ENCODE measurements at regions of chr16 and their contacts with region 1.

Region 1: GRCh38 chr16:67521095-67521804 is 7.4 kb upstream of the RIPOR1 start:
- DNase-seq: peak; percentile 88 to 97 (median 93)
- ATAC-seq: peak; percentile 94
- H3K4me3 ChIP-seq: peak overlapping the region; percentile 92
- H3K4me3 Mint-ChIP-seq: peak overlapping the region; percentile 86 to 94 (median 92)
- H3K27ac ChIP-seq: peak overlapping the region; percentile 87
- H3K27ac Mint-ChIP-seq: peak overlapping the region; percentile 91 to 99 (median 96)
- H3K4me1 ChIP-seq: peaks cover 6 to 9% of the 10 kb centered on the region in 2 donors
- H3K4me1 Mint-ChIP-seq: peaks cover 14 to 35% (median 23%) of the 10 kb centered on the region in 7 donors
- H3K27me3 ChIP-seq: no peaks in the 10 kb centered on the region
- H3K27me3 Mint-ChIP-seq: peaks cover 0 to 28% (median 0%) of the 10 kb centered on the region in 5 donors

Region 2: GRCh38 chr16:67326472-67327309 is 194.6 kb before region 1 on chr16 and contains the starts of genes KCTD19 and LRRC36:
- CTCF ChIA-PET with region 1: no interaction called
- POLR2A ChIA-PET with region 1: no interaction called
- intact Hi-C with region 1: no loop called
- DNase-seq: peak; percentile 5 to 73 (median 17)
- ATAC-seq: peak; percentile 68
- H3K4me3 ChIP-seq: peak within 1 kb of the TSS; percentile 61
- H3K4me3 Mint-ChIP-seq: peak within 1 kb of the TSS; percentile 77 to 94 (median 84)
- H3K27ac ChIP-seq: no peak within 1 kb of the TSS
- H3K27ac Mint-ChIP-seq: peak within 1 kb of the TSS in 4 of 9 donors; percentile 47 to 78 (median 67)
- H3K4me1 ChIP-seq: peaks cover 6 to 11% of the 10 kb centered on the region in 2 donors
- H3K4me1 Mint-ChIP-seq: peaks cover 7 to 17% (median 11%) of the 10 kb centered on the region in 7 donors
- H3K27me3 ChIP-seq: no peaks in the 10 kb centered on the region
- H3K27me3 Mint-ChIP-seq: peaks cover 32 to 57% (median 42%) of the 10 kb centered on the region in 5 donors
- total RNA-seq, gene KCTD19: 0.05 to 0.39 TPM in 2 of 5 experiments, not detected in the others
- total RNA-seq, gene LRRC36: 0.50 to 0.56 TPM in 2 of 5 experiments, not detected in the others

Region 3: DNA sequence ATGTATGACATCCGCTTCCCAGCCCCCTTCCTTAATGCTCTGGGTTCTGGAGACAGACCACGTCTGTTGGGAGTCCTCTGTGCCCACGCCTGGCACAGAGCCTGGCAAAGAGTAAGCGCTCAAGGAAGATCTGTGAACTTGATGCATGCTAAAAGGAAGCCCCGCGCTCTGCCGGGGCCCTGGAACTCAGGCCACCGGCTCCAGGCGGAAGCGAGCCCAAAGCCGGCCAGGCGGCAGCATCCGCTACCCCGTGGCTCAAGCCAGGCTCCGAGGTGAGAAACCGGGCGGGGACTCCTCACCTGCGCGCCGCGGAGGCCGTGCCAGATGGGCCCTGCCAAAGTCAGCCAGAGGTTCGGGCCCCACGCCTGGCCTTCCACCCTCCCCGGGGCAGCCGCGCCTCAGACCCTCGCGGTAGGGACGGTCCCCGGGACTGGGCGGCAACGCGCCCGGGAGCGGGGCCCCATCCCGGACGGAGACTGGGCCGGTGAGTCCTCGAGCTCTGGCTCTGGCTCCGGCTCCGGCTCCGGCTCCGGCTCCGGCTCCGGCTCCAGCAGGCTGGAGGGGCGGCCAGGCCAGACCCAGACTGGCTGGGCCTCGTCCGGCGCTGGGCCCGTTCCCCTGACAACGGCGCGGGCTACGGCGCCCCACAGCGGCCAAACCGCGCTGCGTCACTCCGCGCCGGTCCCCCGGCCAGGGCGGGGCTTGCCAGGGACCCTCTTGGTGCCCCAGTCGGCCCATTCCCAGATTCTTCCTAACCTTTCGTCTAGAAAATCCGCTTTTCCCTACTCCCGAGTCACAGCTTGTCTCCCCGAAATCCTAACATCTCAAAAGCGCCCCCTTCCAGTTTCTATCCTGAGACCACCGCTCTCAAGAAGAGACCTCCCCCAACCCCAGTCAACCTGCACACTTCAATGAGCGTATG is 105.1 kb before region 1 on chr16 and contains the start of gene ZDHHC1:
- CTCF ChIA-PET with region 1: no interaction called
- POLR2A ChIA-PET with region 1: no interaction called
- intact Hi-C with region 1: no loop called
- DNase-seq: peak in 5 of 9 donors; percentile 19 to 76 (median 45)
- ATAC-seq: peak; percentile 90
- H3K4me3 ChIP-seq: peak within 1 kb of the TSS; percentile 30
- H3K4me3 Mint-ChIP-seq: peak within 1 kb of the TSS; percentile 67 to 88 (median 76)
- H3K27ac ChIP-seq: no peak within 1 kb of the TSS
- H3K27ac Mint-ChIP-seq: peak within 1 kb of the TSS in 3 of 9 donors; percentile 11 to 82 (median 63)
- H3K4me1 ChIP-seq: no peaks in the 10 kb centered on the region
- H3K4me1 Mint-ChIP-seq: peaks cover 5 to 15% (median 10%) of the 10 kb centered on the region in 7 donors
- H3K27me3 ChIP-seq: peaks cover 3 to 4% of the 10 kb centered on the region in 2 donors
- H3K27me3 Mint-ChIP-seq: peaks cover 22 to 42% (median 34%) of the 10 kb centered on the region in 5 donors
- total RNA-seq, gene ZDHHC1: 0.34 to 3.6 (median 0.48) TPM in 3 of 5 experiments, not detected in the others

Region 4: DNA sequence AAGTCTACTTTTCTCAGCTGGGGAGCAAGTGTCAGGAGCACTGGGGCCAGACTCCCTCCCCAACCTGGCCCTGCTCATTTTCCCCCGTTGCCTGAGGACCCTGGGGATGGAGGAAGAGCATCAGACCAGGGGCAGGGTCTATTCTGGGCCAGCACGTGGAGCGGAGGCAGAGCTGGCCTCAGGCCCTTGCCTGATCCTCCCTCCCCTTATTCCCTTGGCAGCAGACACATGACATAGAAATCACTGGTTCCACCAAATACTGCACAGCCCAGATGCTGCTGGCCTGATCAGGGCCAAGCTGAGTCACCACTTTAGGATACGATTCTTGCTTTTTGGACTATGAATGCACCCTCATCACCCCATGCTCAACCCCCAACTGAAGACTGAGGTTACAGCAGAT is 22.1 kb before region 1 on chr16:
- CTCF ChIA-PET with region 1: interaction called, 174 read pairs
- POLR2A ChIA-PET with region 1: interaction called, 6 read pairs
- intact Hi-C with region 1: no loop called
- DNase-seq: no peak
- ATAC-seq: no peak
- H3K4me3 ChIP-seq: no peak overlapping the region
- H3K4me3 Mint-ChIP-seq: no peak overlapping the region
- H3K27ac ChIP-seq: no peak overlapping the region
- H3K27ac Mint-ChIP-seq: peak overlapping the region in 7 of 9 donors; percentile 44 to 93 (median 69)
- H3K4me1 ChIP-seq: peaks cover 12 to 15% of the 10 kb centered on the region in 2 donors
- H3K4me1 Mint-ChIP-seq: peaks cover 15 to 29% (median 20%) of the 10 kb centered on the region in 7 donors
- H3K27me3 ChIP-seq: no peaks in the 10 kb centered on the region
- H3K27me3 Mint-ChIP-seq: no peaks in the 10 kb centered on the region

Region 5: DNA sequence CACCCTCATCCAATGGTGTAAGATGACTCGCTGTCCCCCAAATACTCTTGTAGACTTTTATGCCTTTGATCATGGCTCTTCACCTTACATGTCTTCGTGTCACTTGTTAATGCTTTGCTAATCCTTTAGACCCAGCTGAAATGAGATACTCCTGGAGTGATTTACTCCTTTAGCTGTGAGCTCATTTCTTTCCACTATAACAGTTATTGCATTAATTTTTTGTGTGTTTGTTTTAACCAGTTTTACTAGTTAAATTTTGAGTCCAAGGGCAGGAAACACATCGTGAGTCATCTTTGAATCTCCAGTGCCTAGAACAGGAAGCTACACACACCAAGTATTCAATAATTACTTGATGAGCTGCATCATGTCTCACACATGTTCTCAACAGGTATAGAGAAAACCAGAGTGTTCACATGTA is 34.6 kb after region 1 on chr16:
- CTCF ChIA-PET with region 1: interaction called, 23 read pairs
- POLR2A ChIA-PET with region 1: interaction called, 3 read pairs
- intact Hi-C with region 1: no loop called
- DNase-seq: peak in 7 of 9 donors; percentile 34 to 63 (median 50)
- ATAC-seq: peak; percentile 89
- H3K4me3 ChIP-seq: peak overlapping the region; percentile 19
- H3K4me3 Mint-ChIP-seq: peak overlapping the region; percentile 13 to 81 (median 60)
- H3K27ac ChIP-seq: peak overlapping the region; percentile 52
- H3K27ac Mint-ChIP-seq: peak overlapping the region; percentile 75 to 99 (median 92)
- H3K4me1 ChIP-seq: peaks cover 18 to 52% of the 10 kb centered on the region in 2 donors
- H3K4me1 Mint-ChIP-seq: peaks cover 27 to 71% (median 54%) of the 10 kb centered on the region in 7 donors
- H3K27me3 ChIP-seq: no peaks in the 10 kb centered on the region
- H3K27me3 Mint-ChIP-seq: no peaks in the 10 kb centered on the region

Region 6: DNA sequence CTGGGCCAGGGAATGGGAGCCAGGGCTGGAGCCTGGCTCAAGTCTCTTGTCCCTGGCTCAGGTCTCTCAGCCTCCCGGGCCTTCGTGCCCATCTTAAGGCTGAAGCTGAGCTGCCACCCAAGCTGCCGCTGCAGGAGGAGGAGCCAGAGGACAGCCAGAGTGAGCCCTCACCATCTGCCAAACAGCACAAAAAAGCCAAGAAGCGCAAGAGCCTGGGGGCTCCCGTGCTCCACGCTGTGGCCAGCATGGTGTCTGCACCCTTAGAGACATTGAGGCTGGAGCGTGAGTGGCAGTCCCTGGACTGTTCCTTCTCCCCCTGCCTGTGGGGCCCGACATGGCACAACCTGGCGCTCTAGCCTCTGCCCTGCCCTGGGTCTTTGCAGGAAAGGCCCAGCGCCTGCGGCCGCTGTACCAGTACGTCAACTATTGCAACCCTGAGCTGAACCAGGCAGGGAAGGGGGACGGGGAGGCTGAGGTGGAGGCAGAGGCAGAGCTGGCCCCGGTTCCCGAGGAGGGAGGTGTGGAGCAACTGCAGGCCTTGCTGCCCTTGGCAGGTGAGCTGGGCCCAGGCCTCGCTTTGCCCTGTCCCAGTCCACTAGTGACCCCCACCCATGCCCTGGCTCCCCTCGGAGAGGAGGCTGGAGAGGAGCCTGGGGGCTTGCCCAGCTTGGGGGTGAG is 146.7 kb after region 1 on chr16:
- CTCF ChIA-PET with region 1: interaction called, 80 read pairs
- POLR2A ChIA-PET with region 1: interaction called, 7 read pairs
- intact Hi-C with region 1: loop called (anchors 1 kb)
- DNase-seq: peak; percentile 61 to 88 (median 82)
- ATAC-seq: peak; percentile 93
- H3K4me3 ChIP-seq: peak overlapping the region; percentile 56
- H3K4me3 Mint-ChIP-seq: peak overlapping the region; percentile 42 to 96 (median 82)
- H3K27ac ChIP-seq: peak overlapping the region; percentile 73
- H3K27ac Mint-ChIP-seq: peak overlapping the region in 6 of 9 donors; percentile 31 to 67 (median 58)
- H3K4me1 ChIP-seq: peaks cover 9 to 12% of the 10 kb centered on the region in 2 donors
- H3K4me1 Mint-ChIP-seq: peaks cover 10 to 32% (median 17%) of the 10 kb centered on the region in 7 donors
- H3K27me3 ChIP-seq: no peaks in the 10 kb centered on the region
- H3K27me3 Mint-ChIP-seq: no peaks in the 10 kb centered on the region

Region 7: GRCh38 chr16:67841764-67842508 is 320.7 kb after region 1 on chr16 and contains the start of gene THAP11:
- CTCF ChIA-PET with region 1: interaction called, 5 read pairs
- POLR2A ChIA-PET with region 1: no interaction called
- intact Hi-C with region 1: loop called in 1 of 2 experiments (anchors 10 kb)
- DNase-seq: peak; percentile 91 to 99 (median 96)
- ATAC-seq: peak; percentile 76
- H3K4me3 ChIP-seq: peak within 1 kb of the TSS; percentile 100
- H3K4me3 Mint-ChIP-seq: peak within 1 kb of the TSS; percentile 94 to 97 (median 96)
- H3K27ac ChIP-seq: peak within 1 kb of the TSS; percentile 99
- H3K27ac Mint-ChIP-seq: peak within 1 kb of the TSS; percentile 94 to 98 (median 97)
- H3K4me1 ChIP-seq: peaks cover 34 to 36% of the 10 kb centered on the region in 2 donors
- H3K4me1 Mint-ChIP-seq: peaks cover 18 to 41% (median 36%) of the 10 kb centered on the region in 7 donors
- H3K27me3 ChIP-seq: no peaks in the 10 kb centered on the region
- H3K27me3 Mint-ChIP-seq: no peaks in the 10 kb centered on the region
- total RNA-seq, gene THAP11: 29.0 to 62.7 (median 44.6) TPM

Region 8: DNA sequence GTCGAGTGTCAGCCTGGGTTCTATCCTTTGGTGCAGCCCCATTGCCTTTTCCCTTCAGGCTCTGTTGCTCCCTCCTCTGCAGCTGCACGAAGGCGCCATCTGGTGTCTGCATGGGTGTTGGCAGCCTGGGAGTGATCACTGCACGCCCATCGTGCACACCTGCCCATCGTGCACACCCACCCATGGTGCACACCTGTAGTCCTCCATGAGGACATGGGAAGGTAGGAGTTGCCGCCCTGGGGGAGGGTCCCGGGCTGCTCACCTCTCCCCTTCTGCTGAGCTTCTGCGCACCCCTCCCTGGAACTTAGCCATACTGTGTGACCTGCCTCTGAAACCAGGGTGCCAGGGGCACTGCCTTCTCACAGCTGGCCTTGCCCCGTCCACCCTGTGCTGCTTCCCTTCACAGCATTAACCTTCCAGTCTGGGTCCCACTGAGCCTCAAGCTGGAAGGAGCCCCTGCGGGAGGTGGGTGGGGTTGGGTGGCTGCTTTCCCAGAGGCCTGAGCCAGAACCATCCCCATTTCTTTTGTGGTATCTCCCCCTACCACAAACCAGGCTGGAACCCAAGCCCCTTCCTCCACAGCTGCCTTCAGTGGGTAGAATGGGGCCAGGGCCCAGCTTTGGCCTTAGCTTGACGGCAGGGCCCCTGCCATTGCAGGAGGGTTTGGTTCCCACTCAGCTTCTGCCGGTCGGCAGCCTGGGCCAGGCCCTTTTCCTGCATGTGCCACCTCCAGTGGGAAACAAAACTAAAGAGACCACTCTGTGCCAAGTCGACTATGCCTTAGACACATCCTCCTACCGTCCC is 407.5 kb after region 1 on chr16:
- CTCF ChIA-PET with region 1: interaction called, 6 read pairs
- POLR2A ChIA-PET with region 1: no interaction called
- intact Hi-C with region 1: loop called (anchors 1 kb)
- DNase-seq: peak; percentile 53 to 77 (median 73)
- ATAC-seq: peak; percentile 86
- H3K4me3 ChIP-seq: no peak overlapping the region
- H3K4me3 Mint-ChIP-seq: peak overlapping the region in 1 of 10 donors; percentile 45
- H3K27ac ChIP-seq: no peak overlapping the region
- H3K27ac Mint-ChIP-seq: peak overlapping the region in 4 of 9 donors; percentile 6 to 67 (median 56)
- H3K4me1 ChIP-seq: no peaks in the 10 kb centered on the region
- H3K4me1 Mint-ChIP-seq: peaks cover 0 to 10% (median 7%) of the 10 kb centered on the region in 7 donors
- H3K27me3 ChIP-seq: no peaks in the 10 kb centered on the region
- H3K27me3 Mint-ChIP-seq: no peaks in the 10 kb centered on the region

Measured in naive thymus-derived CD4-positive, alpha-beta T cell (primary cell).